ENCODE measurements at regions of chr14 and their contacts with region 1.

Region 1: DNA sequence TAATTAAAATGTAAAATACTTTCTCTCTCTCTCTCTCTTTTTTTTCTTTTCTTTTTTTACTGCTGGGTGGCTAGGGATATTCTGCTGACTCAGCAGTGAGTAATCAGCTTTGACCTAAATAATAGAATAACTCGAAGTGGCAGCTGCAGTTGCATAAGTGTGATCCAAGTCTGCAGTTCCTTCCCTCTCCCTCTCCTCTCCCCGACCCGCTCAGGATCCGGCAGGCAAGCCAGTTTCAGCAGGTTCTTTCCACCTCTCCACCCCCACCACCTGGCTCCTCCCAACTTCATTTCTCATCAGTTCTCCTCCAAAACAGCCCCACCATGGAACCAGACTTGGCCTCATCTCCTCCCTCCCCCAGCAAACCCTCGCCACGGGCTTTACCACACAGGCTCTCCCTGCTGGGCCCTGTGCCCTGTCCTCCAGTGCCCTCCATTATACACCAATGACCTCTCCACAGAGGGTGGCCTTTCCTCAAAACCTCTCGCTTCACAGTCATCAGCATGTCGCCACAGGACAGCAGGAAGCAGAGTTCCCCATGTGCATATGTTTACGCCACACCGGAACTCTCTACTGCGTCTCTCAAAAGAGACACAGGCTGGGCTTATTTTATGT is 22.4 kb downstream of the SLC7A8 start:
- DNase-seq: peak in 1 of 2 donors; percentile 26
- ATAC-seq: peak; percentile 57 to 80 (median 68)
- H3K4me3 ChIP-seq: no peak overlapping the region
- H3K27ac ChIP-seq: peak overlapping the region in 1 of 10 donors; percentile 86
- H3K4me1 ChIP-seq: peaks cover 0 to 48% (median 10%) of the 10 kb centered on the region in 9 donors
- H3K27me3 ChIP-seq: no peaks in the 10 kb centered on the region
- CTCF ChIP-seq: no peak

Region 2: GRCh38 chr14:23125933-23126524 is 35.0 kb before region 1 on chr14:
- intact Hi-C with region 1: loop called in 2 of 10 experiments (anchors 1 to 5 kb)
- DNase-seq: no peak
- ATAC-seq: peak in 2 of 8 donors; percentile 34
- H3K4me3 ChIP-seq: no peak overlapping the region
- H3K27ac ChIP-seq: no peak overlapping the region
- H3K4me1 ChIP-seq: peaks cover 0 to 41% (median 9%) of the 10 kb centered on the region in 9 donors
- H3K27me3 ChIP-seq: no peaks in the 10 kb centered on the region
- CTCF ChIP-seq: no peak